H1 (cell line): ENCODE measurements at regions of chr12 and their contacts with region 1.

Region 1: GRCh38 chr12:45170456-45171042 is 45.3 kb upstream of the ANO6 start:
- DNase-seq: peak; percentile 39 to 94
- H3K4me3 ChIP-seq: no peak overlapping the region
- H3K27ac ChIP-seq: no peak overlapping the region
- H3K4me1 ChIP-seq: no peaks in the 10 kb centered on the region
- H3K27me3 ChIP-seq: no peaks in the 10 kb centered on the region
- CTCF ChIP-seq: peak; percentile 78 to 89 (median 82)
- EP300 ChIP-seq: no peak
- POLR2A ChIP-seq: no peak
- RAD21 ChIP-seq: peak; percentile 85 to 87

Region 2: DNA sequence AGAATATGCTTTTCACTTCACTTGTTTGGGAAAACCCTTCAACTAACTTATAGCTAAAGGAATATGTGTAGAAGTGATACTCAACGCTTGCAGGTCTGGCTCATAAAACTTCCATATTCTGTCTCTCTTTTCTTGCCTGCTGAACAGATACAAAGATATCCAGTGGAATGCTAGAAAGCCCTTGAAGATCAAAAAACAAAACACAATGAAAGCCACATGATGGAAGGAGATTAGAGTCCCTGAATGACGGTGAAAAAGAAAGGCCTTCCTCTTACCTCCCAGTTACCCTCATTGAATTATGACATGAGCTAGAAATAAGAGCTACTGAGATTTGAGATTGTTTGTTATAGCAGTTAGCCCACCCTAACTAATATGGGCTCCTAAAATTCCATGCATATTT is 266.2 kb before region 1 on chr12:
- CTCF ChIA-PET with region 1: no interaction called
- POLR2A ChIA-PET with region 1: no interaction called
- DNase-seq: no peak
- H3K4me3 ChIP-seq: no peak overlapping the region
- H3K27ac ChIP-seq: no peak overlapping the region
- H3K4me1 ChIP-seq: no peaks in the 10 kb centered on the region
- H3K27me3 ChIP-seq: no peaks in the 10 kb centered on the region
- CTCF ChIP-seq: no peak
- EP300 ChIP-seq: no peak
- POLR2A ChIP-seq: no peak
- RAD21 ChIP-seq: no peak

Region 3: GRCh38 chr12:45183246-45183645 is 12.7 kb after region 1 on chr12:
- CTCF ChIA-PET with region 1: interaction called, 10 read pairs
- POLR2A ChIA-PET with region 1: interaction called, 3 read pairs
- DNase-seq: no peak
- H3K4me3 ChIP-seq: no peak overlapping the region
- H3K27ac ChIP-seq: no peak overlapping the region
- H3K4me1 ChIP-seq: no peaks in the 10 kb centered on the region
- H3K27me3 ChIP-seq: no peaks in the 10 kb centered on the region
- CTCF ChIP-seq: peak in 1 of 3 experiments; percentile 31; a peak in 2 of 4 replicates
- EP300 ChIP-seq: no peak
- POLR2A ChIP-seq: no peak
- RAD21 ChIP-seq: peak in 1 of 2 experiments; percentile 44; a peak in 3 of 4 replicates